Activated CD4-positive, alpha-beta T cell treated with anti-CD3 and anti-CD28 coated beads for 36 hours (primary cell): ENCODE measurements at regions of chr20 and their contacts with region 1.

Region 1: GRCh38 chr20:3767427-3768341 is at the start of gene ADISSP:
- DNase-seq: peak; percentile 99
- ATAC-seq: peak; percentile 93
- H3K4me3 Mint-ChIP-seq: peak within 1 kb of the TSS; percentile 81
- H3K27ac Mint-ChIP-seq: peak within 1 kb of the TSS; percentile 70
- H3K4me1 Mint-ChIP-seq: peaks cover 25% of the 10 kb centered on the region
- H3K27me3 Mint-ChIP-seq: no peaks in the 10 kb centered on the region
- total RNA-seq, gene ADISSP: 46.5 to 57.3 TPM

Region 2: DNA sequence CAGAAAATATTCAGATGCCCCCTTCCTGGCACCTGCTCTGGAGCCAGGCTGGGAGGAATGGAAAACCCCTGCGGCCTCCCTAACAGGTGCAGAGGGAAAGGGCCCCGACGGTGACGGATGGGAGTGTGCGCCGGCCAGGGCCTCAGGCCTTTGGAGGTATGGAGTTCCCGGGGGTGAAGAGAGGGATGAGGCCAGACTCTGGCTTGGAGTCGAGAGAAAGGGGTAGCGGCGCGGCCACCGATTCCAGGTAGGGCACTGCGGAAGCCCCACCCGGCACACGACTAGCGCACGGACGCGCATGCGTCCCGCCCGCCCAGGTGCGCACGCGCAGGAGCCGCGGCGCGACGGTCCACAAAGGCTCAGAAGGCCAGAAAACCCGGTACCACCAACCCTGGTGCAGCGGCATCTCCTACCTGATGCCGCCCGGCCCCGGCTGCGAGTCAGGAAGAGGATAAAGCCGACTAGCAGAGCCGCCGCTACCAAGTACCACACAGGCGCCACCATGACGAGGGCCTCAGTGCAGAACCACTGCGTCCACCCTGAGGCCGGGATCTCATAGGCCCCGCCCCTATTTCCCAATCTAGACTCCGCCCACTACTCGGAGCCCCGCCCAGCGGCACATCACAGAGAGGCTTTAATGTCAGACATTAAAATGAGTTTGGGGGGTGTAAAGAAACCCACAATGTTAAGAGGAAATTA is 563.4 kb before region 1 on chr20 and contains the start of gene DDRGK1:
- CTCF ChIA-PET with region 1: no interaction called
- POLR2A ChIA-PET with region 1: no interaction called
- intact Hi-C with region 1: loop called in 1 of 2 experiments (anchors 1 kb)
- DNase-seq: peak; percentile 94
- ATAC-seq: peak; percentile 91
- H3K4me3 Mint-ChIP-seq: peak within 1 kb of the TSS; percentile 92
- H3K27ac Mint-ChIP-seq: peak within 1 kb of the TSS; percentile 98
- H3K4me1 Mint-ChIP-seq: peaks cover 12% of the 10 kb centered on the region
- H3K27me3 Mint-ChIP-seq: no peaks in the 10 kb centered on the region
- total RNA-seq, gene DDRGK1: 49.3 to 52.2 TPM

Region 3: DNA sequence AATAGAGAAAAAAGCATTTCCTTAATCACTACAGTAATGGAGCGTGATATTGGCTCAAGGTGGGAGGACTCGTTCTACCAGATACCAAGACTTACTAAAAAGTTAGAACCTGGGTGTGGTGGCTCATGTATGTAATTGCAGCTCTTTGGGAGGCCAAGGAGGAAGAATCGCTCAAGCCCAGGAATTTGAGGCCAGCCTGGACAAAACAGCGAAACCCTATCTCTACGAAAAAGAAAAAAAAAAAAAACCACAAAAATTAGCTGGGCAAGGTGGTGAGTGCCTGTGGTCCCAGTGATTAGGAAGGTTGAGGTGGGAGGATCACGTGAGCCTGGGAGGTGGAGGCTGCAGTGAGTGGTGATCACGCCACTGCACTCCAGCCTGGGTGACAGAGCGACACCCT is 320.9 kb before region 1 on chr20:
- CTCF ChIA-PET with region 1: no interaction called
- POLR2A ChIA-PET with region 1: no interaction called
- intact Hi-C with region 1: no loop called
- DNase-seq: no peak
- ATAC-seq: no peak
- H3K4me3 Mint-ChIP-seq: no peak overlapping the region
- H3K27ac Mint-ChIP-seq: no peak overlapping the region
- H3K4me1 Mint-ChIP-seq: no peaks in the 10 kb centered on the region
- H3K27me3 Mint-ChIP-seq: peaks cover 3% of the 10 kb centered on the region

Region 4: DNA sequence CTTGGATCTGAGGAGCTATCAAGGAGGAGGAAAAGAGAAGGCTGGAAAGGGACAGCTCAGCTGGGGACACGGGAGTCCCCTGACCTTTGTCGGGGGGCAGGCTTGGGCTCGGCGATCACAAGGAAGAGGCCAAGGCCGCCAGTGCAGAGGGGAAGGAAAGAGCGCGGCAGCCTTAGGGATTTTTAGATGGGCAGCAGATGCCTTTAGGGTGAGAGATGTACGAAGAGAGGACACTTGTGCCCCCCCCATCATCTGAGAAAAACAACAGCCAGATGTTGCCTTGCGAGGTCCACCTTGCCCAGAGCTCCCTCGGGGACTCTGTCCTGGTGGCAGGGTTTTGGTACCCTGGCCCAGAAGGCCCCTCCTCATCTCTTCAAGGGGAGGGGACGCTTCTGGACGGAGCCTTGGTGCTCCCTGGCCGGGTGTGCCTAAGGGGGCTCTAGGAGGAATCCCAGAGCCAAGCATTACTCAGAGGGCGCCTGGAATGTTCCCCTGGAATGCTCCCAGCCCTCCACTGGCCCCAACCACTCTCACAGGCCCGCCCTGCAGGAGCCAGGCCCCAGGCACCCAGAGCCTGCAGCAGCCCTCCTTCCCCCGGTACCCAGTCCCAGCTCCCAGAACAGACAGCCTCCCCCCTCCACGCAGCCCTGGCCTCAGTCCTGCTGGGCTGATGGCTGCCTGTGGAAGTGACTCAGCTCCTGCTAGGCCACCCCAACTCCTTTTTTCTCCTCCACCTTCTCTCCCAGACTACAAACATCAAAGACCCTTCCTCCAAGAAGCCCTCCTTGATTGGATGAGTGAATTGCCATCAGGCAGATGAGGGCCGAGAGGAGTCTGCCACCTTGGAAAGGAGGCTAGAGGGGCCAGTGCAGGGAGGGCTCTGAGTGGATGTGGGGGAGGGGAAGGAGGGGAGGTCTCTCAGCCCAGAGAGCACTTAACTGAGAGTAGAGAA is 87.7 kb before region 1 on chr20:
- CTCF ChIA-PET with region 1: no interaction called
- POLR2A ChIA-PET with region 1: no interaction called
- intact Hi-C with region 1: loop called in 1 of 2 experiments (anchors 1 kb)
- DNase-seq: no peak
- ATAC-seq: no peak
- H3K4me3 Mint-ChIP-seq: no peak overlapping the region
- H3K27ac Mint-ChIP-seq: no peak overlapping the region
- H3K4me1 Mint-ChIP-seq: peaks cover 6% of the 10 kb centered on the region
- H3K27me3 Mint-ChIP-seq: peaks cover 37% of the 10 kb centered on the region

Region 5: GRCh38 chr20:3786665-3787323 is 19.1 kb after region 1 on chr20 and contains the start of gene CENPB:
- CTCF ChIA-PET with region 1: interaction called, 47 read pairs
- POLR2A ChIA-PET with region 1: interaction called, 7 read pairs
- intact Hi-C with region 1: loop called in 1 of 2 experiments (anchors 1 kb)
- DNase-seq: peak; percentile 95
- ATAC-seq: peak; percentile 89
- H3K4me3 Mint-ChIP-seq: peak within 1 kb of the TSS; percentile 77
- H3K27ac Mint-ChIP-seq: peak within 1 kb of the TSS; percentile 84
- H3K4me1 Mint-ChIP-seq: peaks cover 39% of the 10 kb centered on the region
- H3K27me3 Mint-ChIP-seq: no peaks in the 10 kb centered on the region
- total RNA-seq, gene CENPB: 46.2 to 48.3 TPM

Region 6: DNA sequence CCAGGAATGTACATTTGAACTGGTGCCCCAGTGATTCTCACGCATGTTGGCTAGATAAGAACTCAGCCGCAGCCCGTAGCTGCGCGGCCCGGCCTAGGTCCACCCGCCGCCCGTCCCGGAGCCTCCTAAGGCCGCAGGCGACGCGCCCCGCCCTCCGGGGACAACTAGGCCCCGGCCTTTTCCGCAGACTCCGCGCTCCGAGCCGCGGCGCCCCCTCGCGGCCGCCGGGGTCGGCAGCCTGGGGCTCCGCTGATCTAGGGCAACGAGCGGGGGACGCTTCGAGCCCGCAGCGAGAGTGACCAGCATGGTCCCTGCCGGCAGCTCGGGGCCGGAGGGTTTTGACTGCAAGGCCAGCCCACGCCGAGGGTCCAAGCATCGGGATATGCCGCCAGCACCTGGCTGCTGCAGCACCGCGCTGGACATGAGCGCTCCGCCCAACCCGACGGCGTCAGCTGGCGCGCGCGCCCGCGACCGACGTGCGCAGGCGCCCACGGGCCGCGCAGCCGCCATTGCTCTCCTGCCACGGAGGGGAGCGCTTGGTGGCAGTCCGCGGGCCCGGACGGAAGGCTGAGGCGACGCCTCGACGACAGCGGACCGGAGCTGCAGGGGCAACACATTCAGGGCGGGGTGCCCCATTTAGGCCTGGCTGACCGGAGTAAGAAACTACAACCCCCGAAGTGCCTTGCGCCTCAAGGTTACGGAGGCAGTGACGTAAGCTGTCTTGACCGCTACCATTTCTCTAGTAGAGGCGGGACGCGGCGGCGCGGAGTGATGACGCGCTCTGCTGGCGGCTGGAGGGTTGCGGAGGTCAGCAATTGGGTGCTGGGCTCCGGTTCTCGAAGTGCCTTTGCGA is 52.6 kb after region 1 on chr20 and contains the start of gene AP5S1:
- CTCF ChIA-PET with region 1: interaction called, 28 read pairs
- POLR2A ChIA-PET with region 1: interaction called, 7 read pairs
- intact Hi-C with region 1: loop called (anchors 1 kb)
- DNase-seq: peak; percentile 96
- ATAC-seq: peak; percentile 86
- H3K4me3 Mint-ChIP-seq: peak within 1 kb of the TSS; percentile 89
- H3K27ac Mint-ChIP-seq: peak within 1 kb of the TSS; percentile 96
- H3K4me1 Mint-ChIP-seq: peaks cover 33% of the 10 kb centered on the region
- H3K27me3 Mint-ChIP-seq: no peaks in the 10 kb centered on the region
- total RNA-seq, gene AP5S1: 9.1 to 11.3 TPM

Region 7: GRCh38 chr20:3980260-3981131 is 212.8 kb after region 1 on chr20:
- CTCF ChIA-PET with region 1: no interaction called
- POLR2A ChIA-PET with region 1: no interaction called
- intact Hi-C with region 1: loop called in 1 of 2 experiments (anchors 1 kb)
- DNase-seq: peak; percentile 65
- ATAC-seq: peak; percentile 93
- H3K4me3 Mint-ChIP-seq: peak overlapping the region; percentile 24
- H3K27ac Mint-ChIP-seq: peak overlapping the region; percentile 83
- H3K4me1 Mint-ChIP-seq: peaks cover 21% of the 10 kb centered on the region
- H3K27me3 Mint-ChIP-seq: no peaks in the 10 kb centered on the region